GM12878 (cell line): ENCODE measurements at regions of chr17 and their contacts with region 1.

Region 1: DNA sequence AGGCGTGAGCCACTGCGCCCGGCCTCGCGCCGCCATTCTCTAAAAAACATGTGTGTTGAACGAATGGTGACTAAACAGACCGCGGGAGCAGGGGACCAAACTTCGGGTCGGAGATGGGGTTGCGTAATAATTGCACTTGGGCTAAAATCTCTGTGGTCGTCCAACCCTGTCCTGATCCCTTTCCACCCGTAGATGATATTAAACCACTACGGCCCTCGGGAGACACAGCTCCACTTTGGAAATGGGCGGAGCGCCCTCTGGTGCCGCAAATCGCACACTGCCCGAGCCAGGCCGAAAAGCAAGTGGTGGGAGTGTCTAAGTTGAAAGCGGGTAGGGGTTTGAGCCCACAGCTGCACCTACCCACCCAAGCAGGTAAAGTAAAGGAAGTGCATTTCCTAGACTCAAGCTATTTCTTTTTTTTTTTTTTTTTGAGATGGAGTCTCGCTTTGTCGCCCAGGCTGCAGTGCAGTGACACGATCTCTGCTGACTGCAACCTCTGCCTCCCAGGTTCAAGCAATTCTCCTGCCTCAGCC is 17.0 kb downstream of the CAVIN1 start:
- DNase-seq: no peak
- ATAC-seq: peak; percentile 84
- H3K4me3 ChIP-seq: no peak overlapping the region
- H3K27ac ChIP-seq: no peak overlapping the region
- H3K4me1 ChIP-seq: peaks cover 4% of the 10 kb centered on the region; the same call in 1 of the 2 replicates
- H3K27me3 ChIP-seq: no peaks in the 10 kb centered on the region
- CTCF ChIP-seq: peak; percentile 91 to 94 (median 91)
- EP300 ChIP-seq: no peak
- POLR2A ChIP-seq: no peak
- RAD21 ChIP-seq: peak; percentile 97

Region 2: GRCh38 chr17:42193969-42194899 is 211.8 kb before region 1 on chr17 and contains the start of gene GHDC:
- CTCF ChIA-PET with region 1: interaction called, 11 read pairs
- POLR2A ChIA-PET with region 1: no interaction called
- RAD21 ChIA-PET with region 1: interaction called, 4 read pairs
- SMC1A ChIA-PET with region 1: interaction called, 6 read pairs
- in situ Hi-C with region 1: no loop called
- intact Hi-C with region 1: loop called (anchors 10 kb)
- DNase-seq: peak; percentile 53
- ATAC-seq: peak; percentile 99
- H3K4me3 ChIP-seq: peak within 1 kb of the TSS; percentile 92
- H3K27ac ChIP-seq: peak within 1 kb of the TSS; percentile 95
- H3K4me1 ChIP-seq: 0 out of 2 replicates have a peak, but pooled peaks cover 3% of the 10 kb centered on the region
- H3K27me3 ChIP-seq: no peaks in the 10 kb centered on the region
- CTCF ChIP-seq: 0 out of 6 replicates have a peak, but pooled peaks of 1 of the 3 experiments have one; percentile 6
- EP300 ChIP-seq: no peak
- POLR2A ChIP-seq: peak; percentile 74
- RAD21 ChIP-seq: no peak
- polyA plus RNA-seq, gene GHDC: 0.72 to 2.2 TPM

Region 3: GRCh38 chr17:42312285-42313130 is 93.5 kb before region 1 on chr17:
- CTCF ChIA-PET with region 1: interaction called, 732 read pairs
- POLR2A ChIA-PET with region 1: interaction called, 6 read pairs
- RAD21 ChIA-PET with region 1: interaction called, 373 read pairs
- SMC1A ChIA-PET with region 1: interaction called, 528 read pairs
- in situ Hi-C with region 1: no loop called
- intact Hi-C with region 1: loop called (anchors 2 kb)
- DNase-seq: no peak
- ATAC-seq: peak; percentile 91
- H3K4me3 ChIP-seq: no peak overlapping the region
- H3K27ac ChIP-seq: peak overlapping the region; percentile 53
- H3K4me1 ChIP-seq: peaks cover 43% of the 10 kb centered on the region
- H3K27me3 ChIP-seq: no peaks in the 10 kb centered on the region
- CTCF ChIP-seq: peak; percentile 60 to 87 (median 71)
- EP300 ChIP-seq: no peak
- POLR2A ChIP-seq: peak; percentile 82
- RAD21 ChIP-seq: peak; percentile 67

Region 4: GRCh38 chr17:42337442-42337841 is 68.6 kb before region 1 on chr17:
- CTCF ChIA-PET with region 1: interaction called, 48 read pairs
- POLR2A ChIA-PET with region 1: interaction called, 5 read pairs
- RAD21 ChIA-PET with region 1: interaction called, 14 read pairs
- SMC1A ChIA-PET with region 1: interaction called, 14 read pairs
- in situ Hi-C with region 1: no loop called
- intact Hi-C with region 1: no loop called
- DNase-seq: peak; percentile 94
- ATAC-seq: peak; percentile 78
- H3K4me3 ChIP-seq: no peak overlapping the region
- H3K27ac ChIP-seq: peak overlapping the region; percentile 73
- H3K4me1 ChIP-seq: peaks cover 64% of the 10 kb centered on the region
- H3K27me3 ChIP-seq: no peaks in the 10 kb centered on the region
- CTCF ChIP-seq: no peak
- EP300 ChIP-seq: peak; percentile 70 to 85
- POLR2A ChIP-seq: 0 out of 2 replicates have a peak, but pooled peaks have one; percentile 17
- RAD21 ChIP-seq: no peak

Region 5: DNA sequence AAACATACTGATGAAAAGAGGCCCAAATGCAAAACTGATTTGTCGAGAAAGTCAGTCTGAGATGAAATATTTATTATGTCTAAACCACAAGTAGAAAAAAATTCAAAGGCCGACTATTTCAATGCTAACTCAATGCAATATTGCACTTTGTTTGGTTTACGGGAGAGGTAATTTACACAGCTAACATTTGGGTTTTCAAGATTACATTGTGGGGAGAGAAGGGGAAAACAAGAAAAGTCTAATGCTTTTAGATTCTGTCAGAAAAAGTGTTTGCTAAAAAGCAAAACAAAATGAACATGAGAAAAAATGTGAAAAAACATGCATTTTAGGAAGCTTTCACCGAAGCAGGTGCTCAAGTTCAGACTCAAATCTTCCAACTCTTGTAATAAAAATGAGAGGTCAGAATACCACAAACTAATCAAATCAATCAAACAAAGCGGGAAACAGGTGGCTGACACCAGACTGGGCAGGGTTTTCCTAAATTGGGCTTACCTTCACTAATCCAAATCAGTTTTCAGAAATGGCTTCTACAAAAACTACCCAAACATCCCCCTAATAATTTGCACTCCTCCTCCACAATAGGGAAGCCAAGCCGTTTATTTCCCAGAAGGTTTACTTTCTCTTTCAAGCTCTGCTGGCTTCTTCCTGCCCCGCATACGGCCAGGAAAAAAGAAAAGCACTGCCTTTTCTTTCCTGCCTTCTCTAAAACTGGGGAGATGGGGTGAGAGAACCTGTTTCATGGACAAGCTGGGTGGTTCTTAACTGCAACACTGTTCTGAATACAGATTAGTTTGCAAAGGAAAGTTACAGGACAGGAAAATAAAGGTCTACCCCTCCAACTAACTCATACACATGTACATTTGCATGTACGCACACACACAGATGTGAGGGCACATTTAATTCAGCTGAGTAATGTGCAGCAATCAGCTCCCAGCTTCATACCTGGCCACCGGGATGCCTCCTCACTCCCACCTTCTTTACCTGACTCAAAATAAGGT is 27.1 kb before region 1 on chr17:
- CTCF ChIA-PET with region 1: interaction called, 11 read pairs
- POLR2A ChIA-PET with region 1: interaction called, 3 read pairs
- RAD21 ChIA-PET with region 1: interaction called, 11 read pairs
- SMC1A ChIA-PET with region 1: interaction called, 17 read pairs
- in situ Hi-C with region 1: no loop called
- intact Hi-C with region 1: no loop called
- DNase-seq: peak; percentile 41
- ATAC-seq: peak; percentile 63
- H3K4me3 ChIP-seq: peak overlapping the region; percentile 80
- H3K27ac ChIP-seq: peak overlapping the region; percentile 90
- H3K4me1 ChIP-seq: peaks cover 31% of the 10 kb centered on the region
- H3K27me3 ChIP-seq: no peaks in the 10 kb centered on the region
- CTCF ChIP-seq: no peak
- EP300 ChIP-seq: no peak; a peak in 1 of 4 replicates
- POLR2A ChIP-seq: no peak
- RAD21 ChIP-seq: no peak

Region 6: DNA sequence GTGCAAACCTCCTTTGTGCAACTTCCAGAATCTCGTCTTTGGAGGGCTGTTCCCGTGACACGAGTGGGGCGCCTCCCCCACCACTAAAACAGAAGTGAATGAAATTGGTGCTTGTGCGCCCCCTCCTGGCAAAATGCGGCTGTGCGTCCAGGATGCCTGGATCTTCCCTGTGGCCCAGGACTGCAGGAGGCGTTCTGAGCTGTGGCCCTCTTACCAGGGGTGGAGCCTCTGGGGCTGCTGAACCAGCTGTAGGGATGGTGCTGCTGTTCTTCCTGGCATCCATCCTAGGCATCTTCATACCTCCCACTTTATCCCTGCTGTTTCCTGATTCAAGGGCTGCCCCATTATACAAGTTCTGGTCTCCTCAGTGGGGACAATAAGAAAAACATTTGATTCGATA is 111.5 kb after region 1 on chr17:
- CTCF ChIA-PET with region 1: interaction called, 25 read pairs
- POLR2A ChIA-PET with region 1: no interaction called
- RAD21 ChIA-PET with region 1: interaction called, 7 read pairs
- SMC1A ChIA-PET with region 1: interaction called, 6 read pairs
- in situ Hi-C with region 1: no loop called
- intact Hi-C with region 1: loop called (anchors 5 kb)
- DNase-seq: no peak
- ATAC-seq: peak; percentile 85
- H3K4me3 ChIP-seq: no peak overlapping the region
- H3K27ac ChIP-seq: no peak overlapping the region
- H3K4me1 ChIP-seq: peaks cover 4% of the 10 kb centered on the region
- H3K27me3 ChIP-seq: no peaks in the 10 kb centered on the region
- CTCF ChIP-seq: peak; percentile 93 to 98 (median 98); a peak in 5 of 6 replicates
- EP300 ChIP-seq: no peak
- POLR2A ChIP-seq: no peak
- RAD21 ChIP-seq: peak; percentile 85

Region 7: GRCh38 chr17:42571435-42572225 is 165.6 kb after region 1 on chr17:
- CTCF ChIA-PET with region 1: no interaction called
- POLR2A ChIA-PET with region 1: no interaction called
- RAD21 ChIA-PET with region 1: no interaction called
- SMC1A ChIA-PET with region 1: no interaction called
- in situ Hi-C with region 1: no loop called
- intact Hi-C with region 1: no loop called
- DNase-seq: no peak
- ATAC-seq: no peak
- H3K4me3 ChIP-seq: no peak overlapping the region
- H3K27ac ChIP-seq: no peak overlapping the region
- H3K4me1 ChIP-seq: peaks cover 4% of the 10 kb centered on the region; the same call in 1 of the 2 replicates
- H3K27me3 ChIP-seq: no peaks in the 10 kb centered on the region
- CTCF ChIP-seq: no peak
- EP300 ChIP-seq: no peak
- POLR2A ChIP-seq: no peak
- RAD21 ChIP-seq: no peak

Region 8: GRCh38 chr17:42618442-42619150 is 212.6 kb after region 1 on chr17:
- CTCF ChIA-PET with region 1: no interaction called
- POLR2A ChIA-PET with region 1: no interaction called
- RAD21 ChIA-PET with region 1: no interaction called
- SMC1A ChIA-PET with region 1: no interaction called
- in situ Hi-C with region 1: no loop called
- intact Hi-C with region 1: no loop called
- DNase-seq: peak; percentile 93
- ATAC-seq: peak; percentile 86
- H3K4me3 ChIP-seq: peak overlapping the region; percentile 58
- H3K27ac ChIP-seq: peak overlapping the region; percentile 91
- H3K4me1 ChIP-seq: peaks cover 33% of the 10 kb centered on the region
- H3K27me3 ChIP-seq: no peaks in the 10 kb centered on the region
- CTCF ChIP-seq: peak in 1 of 3 experiments; percentile 62; a peak in 3 of 6 replicates
- EP300 ChIP-seq: peak; percentile 49 to 84; a peak in 2 of 4 replicates
- POLR2A ChIP-seq: no peak; the same call in 1 of the 2 replicates
- RAD21 ChIP-seq: peak; percentile 64